ENCODE measurements at regions of chr5 and their contacts with region 1.

Region 1: DNA sequence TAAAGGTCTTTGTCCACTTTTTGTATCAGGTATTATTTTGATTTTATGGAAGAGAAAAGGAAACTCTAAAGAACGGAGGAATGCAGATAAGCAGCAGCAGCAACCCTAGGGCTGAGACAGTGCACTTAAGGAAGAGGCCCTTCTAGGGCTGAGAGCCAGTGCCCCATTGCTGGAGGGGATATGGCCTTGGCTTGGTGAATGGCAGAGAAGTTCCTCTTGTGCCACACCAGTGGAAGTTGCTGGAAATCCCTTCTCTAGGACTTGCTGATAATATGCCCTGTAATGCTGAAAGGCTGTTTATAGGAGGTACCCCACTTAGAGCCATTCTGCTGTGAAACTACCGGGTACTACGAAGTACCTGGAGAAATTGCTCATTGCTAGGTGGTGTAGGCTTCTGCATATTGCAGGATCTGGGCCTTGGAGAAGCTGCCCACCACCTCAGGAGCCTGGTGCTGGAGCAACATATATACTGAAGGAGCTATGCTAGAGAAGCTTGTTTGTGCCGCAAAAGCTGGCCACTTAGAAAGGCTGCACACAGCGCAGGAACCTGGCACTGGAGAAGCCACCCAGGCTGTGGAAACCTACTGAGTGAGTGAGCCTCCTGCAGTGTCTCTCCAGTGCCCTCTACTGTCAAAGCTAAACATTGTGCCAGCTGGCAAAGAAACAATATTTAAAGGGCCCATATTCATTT is 9.6 kb upstream of the UBTD2 start:
- DNase-seq: peak in 1 of 2 donors; percentile 53
- H3K4me3 ChIP-seq: no peak overlapping the region
- CTCF ChIP-seq: peak in 1 of 3 donors; percentile 76
- POLR2A ChIP-seq: no peak

Region 2: DNA sequence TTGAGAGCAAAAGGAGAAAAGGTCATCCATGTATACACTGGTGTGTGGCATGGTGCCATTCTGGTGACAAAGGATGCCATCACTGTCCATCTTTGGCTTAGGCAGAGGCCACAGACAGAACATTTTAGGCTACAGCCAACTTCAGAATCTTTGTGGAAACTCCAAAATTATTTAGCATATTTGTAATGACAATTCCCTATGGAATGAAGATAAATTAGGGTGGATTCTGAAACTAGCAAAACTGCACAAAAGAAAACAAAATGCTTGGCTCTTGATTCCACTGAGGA is 379.3 kb before region 1 on chr5:
- intact Hi-C with region 1: loop called (anchors 10 kb)
- DNase-seq: no peak
- H3K4me3 ChIP-seq: no peak overlapping the region
- CTCF ChIP-seq: no peak
- POLR2A ChIP-seq: no peak

Region 3: GRCh38 chr5:172106511-172107356 is 186.5 kb before region 1 on chr5:
- intact Hi-C with region 1: loop called (anchors 5 kb)
- DNase-seq: peak in 1 of 2 donors; percentile 91
- H3K4me3 ChIP-seq: no peak overlapping the region
- CTCF ChIP-seq: no peak
- POLR2A ChIP-seq: no peak

Measured in lower leg skin (tissue), 4 donors.